ENCODE measurements at regions of chr11 and their contacts with region 1.

Region 1: DNA sequence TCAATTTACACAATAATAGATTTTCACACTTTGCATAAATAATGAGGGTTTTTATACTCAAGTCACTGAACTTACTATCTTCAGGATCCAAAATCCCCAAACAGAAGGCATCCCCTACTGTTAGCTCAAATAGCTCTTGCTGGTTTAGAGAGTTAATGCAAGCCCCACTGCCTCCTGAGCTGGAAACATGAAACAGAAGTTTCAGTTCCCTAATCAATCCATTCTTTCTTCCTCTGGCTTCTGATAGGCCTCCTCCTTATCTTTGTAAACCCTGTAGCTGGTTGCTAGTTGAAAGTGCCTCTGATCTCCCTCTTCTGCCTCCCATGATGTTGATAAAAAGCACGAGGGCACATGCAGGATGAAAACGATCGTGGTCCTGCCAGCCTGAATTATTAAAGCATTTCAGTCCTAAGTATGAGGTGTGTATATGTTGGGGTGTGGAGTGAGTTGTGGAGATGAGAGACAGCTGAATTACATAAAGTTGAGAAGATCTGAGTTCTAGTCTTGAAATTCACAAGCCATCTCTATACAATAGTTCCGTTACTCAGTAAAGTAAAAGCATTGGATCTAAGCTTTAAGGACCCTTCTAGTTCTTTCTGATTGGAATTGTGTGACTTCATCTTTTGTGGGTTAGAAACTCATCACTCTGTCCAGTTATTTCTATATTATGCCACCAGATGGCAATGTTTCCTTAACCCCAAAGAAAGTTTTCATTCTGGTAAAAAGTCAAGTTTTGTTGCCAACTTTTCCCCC is 35.0 kb upstream of the EHF start:
- DNase-seq: no peak
- H3K4me3 Mint-ChIP-seq: no peak overlapping the region
- H3K27ac Mint-ChIP-seq: no peak overlapping the region
- H3K4me1 Mint-ChIP-seq: no peaks in the 10 kb centered on the region
- H3K27me3 Mint-ChIP-seq: peaks cover 21% of the 10 kb centered on the region

Region 2: GRCh38 chr11:34640050-34640923 is 54.4 kb after region 1 on chr11:
- intact Hi-C with region 1: no loop called
- DNase-seq: no peak
- H3K4me3 Mint-ChIP-seq: no peak overlapping the region
- H3K27ac Mint-ChIP-seq: no peak overlapping the region
- H3K4me1 Mint-ChIP-seq: no peaks in the 10 kb centered on the region
- H3K27me3 Mint-ChIP-seq: peaks cover 43% of the 10 kb centered on the region

Region 3: DNA sequence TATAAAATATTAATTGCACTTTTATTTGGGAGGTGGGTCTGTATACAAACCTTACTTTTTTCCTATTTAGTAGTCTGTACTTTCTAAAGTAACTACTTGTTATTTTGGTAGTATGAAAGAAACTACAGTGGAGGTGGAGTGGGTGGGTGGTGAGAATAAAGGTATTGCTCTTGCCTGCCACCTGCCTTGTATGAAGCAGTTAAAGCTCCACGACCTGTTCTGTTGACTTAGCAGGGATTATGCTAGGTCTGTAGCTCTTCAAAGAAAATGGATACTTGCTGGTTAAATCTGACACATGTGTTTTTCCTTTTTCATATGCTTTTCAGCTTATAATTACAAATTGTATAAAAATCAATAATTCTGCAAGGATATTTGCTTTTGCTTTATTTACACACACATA is 146.9 kb after region 1 on chr11:
- intact Hi-C with region 1: no loop called
- DNase-seq: no peak
- H3K4me3 Mint-ChIP-seq: no peak overlapping the region
- H3K27ac Mint-ChIP-seq: no peak overlapping the region
- H3K4me1 Mint-ChIP-seq: no peaks in the 10 kb centered on the region
- H3K27me3 Mint-ChIP-seq: peaks cover 6% of the 10 kb centered on the region

Region 4: DNA sequence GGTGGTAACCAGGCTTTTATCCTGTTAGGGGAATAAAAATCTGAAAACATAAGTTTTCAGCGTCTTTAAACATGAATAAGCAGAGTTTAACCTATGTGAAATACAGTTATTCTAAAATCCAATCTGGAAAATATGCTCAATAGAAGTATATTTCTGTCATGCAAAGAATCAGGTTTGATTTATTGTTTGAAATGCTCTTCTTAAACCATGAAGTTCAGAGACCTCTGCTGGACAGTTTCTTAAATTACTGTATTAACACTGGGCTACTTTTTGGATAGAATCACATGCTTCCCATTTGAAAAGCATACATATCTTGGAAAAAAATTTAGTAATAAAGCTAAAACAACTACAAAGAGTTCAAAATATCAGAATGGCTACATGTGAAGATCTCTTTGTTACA is 304.9 kb after region 1 on chr11:
- intact Hi-C with region 1: loop called (anchors 1 kb)
- DNase-seq: no peak
- H3K4me3 Mint-ChIP-seq: no peak overlapping the region
- H3K27ac Mint-ChIP-seq: no peak overlapping the region
- H3K4me1 Mint-ChIP-seq: no peaks in the 10 kb centered on the region
- H3K27me3 Mint-ChIP-seq: no peaks in the 10 kb centered on the region

Region 5: DNA sequence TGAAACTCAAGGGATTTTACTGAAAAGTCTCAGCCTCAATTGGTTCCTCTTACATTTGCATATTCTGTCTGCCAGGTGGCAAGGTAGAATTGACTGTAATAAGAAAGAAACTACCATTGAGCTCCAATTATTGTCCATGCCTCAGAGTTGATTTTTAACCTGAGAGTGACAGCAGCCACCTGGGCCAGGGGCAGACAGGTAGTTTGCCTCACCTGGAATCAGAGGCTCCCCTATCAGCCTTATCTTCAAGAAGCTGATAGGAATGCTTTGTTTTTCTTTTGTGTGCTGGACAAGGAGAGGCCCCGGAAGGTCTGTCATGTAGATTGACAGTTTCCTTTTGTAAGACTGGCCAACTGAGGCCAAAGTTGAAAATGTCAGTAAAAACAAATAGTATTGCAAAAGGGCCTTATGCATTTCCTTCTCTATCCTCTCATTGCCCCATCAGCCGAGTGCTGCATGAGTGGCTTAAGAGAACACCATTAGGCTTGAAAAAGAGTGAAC is 587.1 kb after region 1 on chr11:
- intact Hi-C with region 1: loop called (anchors 10 kb)
- DNase-seq: no peak
- H3K4me3 Mint-ChIP-seq: peak overlapping the region; percentile 56
- H3K27ac Mint-ChIP-seq: peak overlapping the region; percentile 75
- H3K4me1 Mint-ChIP-seq: peaks cover 92% of the 10 kb centered on the region
- H3K27me3 Mint-ChIP-seq: no peaks in the 10 kb centered on the region

Region 6: DNA sequence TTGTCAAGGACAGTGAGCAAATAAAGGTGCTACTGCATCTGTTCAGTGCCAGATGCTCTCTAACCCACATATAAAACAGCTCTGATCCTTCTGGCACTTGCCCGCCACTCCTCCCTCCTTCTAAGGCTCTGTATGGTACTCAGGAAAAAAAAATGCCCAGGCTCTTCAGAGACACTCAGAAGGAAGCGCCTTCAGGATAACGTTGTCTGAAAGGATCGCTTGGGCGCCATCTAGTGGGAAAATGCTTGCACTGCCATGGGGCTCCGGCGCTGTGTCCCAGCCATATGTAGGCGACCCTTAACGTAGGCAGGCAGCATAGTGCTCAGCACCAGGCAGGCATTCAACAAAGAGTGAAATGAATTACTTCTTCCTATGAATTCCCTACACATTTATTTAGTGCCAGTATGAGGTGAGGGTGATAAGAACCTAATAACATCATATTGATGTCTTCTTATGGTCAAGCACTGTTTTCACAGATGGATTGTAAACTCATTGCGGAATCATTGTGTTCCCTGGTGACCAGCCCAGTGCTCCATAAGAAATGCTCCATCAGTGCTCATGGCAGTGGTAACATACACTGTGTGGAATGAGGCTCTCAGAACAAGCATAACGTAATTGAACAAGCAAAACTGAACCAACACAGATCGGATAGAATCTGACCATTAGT is 899.9 kb after region 1 on chr11:
- intact Hi-C with region 1: loop called (anchors 1 kb)
- DNase-seq: peak; percentile 34
- H3K4me3 Mint-ChIP-seq: no peak overlapping the region
- H3K27ac Mint-ChIP-seq: no peak overlapping the region
- H3K4me1 Mint-ChIP-seq: no peaks in the 10 kb centered on the region
- H3K27me3 Mint-ChIP-seq: peaks cover 20% of the 10 kb centered on the region

Measured in activated T-helper 1 cell treated with anti-CD3 and anti-CD28 coated beads, Interleukin-12 subunit alpha, Interleukin-12 subunit beta, Interleukin-2, Interleukin-4 antibody, amounts not matched to agents 30 ng/mL and 10 ng/mL and 1 ng/mL, durations not matched to agents 14 hours and 24 hours and 36 hours (primary cell).